ENCODE measurements at regions of chr5 and their contacts with region 1.

Region 1: DNA sequence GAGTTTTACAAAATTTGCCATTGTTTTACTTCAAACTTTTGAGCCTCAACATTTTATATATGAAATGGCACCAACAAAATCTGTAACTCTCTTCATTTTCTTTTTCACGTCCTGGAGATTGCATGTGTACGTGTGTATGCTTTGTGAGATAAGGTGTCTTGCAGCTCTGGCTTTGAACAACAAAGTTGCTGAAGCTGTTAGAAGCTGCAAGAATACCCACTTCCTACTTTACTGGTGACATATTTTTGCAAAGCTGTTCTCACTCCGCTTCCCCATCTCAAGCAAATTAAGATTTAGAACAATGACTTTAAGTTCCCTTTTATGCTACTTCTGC is 41.8 kb downstream of the FYB1 start:
- DNase-seq: no peak
- H3K4me3 Mint-ChIP-seq: peak overlapping the region; percentile 69
- H3K27ac Mint-ChIP-seq: peak overlapping the region; percentile 84
- H3K4me1 Mint-ChIP-seq: peaks cover 85% of the 10 kb centered on the region
- H3K27me3 Mint-ChIP-seq: no peaks in the 10 kb centered on the region

Region 2: DNA sequence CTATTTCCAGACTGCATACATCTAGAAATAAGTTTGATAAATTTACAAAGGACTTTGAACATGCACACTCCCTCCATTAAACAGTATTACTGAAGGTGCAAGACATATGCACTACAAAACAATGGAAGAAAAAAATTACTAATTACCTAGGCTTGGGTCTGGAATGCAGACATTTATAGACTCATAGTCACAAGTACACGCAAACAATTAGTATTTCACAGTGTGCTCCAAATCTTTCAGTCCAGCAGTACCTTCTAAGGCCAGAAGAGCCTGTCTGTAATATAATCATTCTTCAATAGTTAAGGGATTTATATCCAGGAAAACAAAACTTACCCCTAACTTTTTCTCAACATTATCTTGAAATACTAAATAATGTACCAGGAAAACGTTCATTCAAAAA is 114.6 kb before region 1 on chr5:
- intact Hi-C with region 1: no loop called
- DNase-seq: no peak
- H3K4me3 Mint-ChIP-seq: no peak overlapping the region
- H3K27ac Mint-ChIP-seq: no peak overlapping the region
- H3K4me1 Mint-ChIP-seq: peaks cover 31% of the 10 kb centered on the region
- H3K27me3 Mint-ChIP-seq: no peaks in the 10 kb centered on the region

Region 3: DNA sequence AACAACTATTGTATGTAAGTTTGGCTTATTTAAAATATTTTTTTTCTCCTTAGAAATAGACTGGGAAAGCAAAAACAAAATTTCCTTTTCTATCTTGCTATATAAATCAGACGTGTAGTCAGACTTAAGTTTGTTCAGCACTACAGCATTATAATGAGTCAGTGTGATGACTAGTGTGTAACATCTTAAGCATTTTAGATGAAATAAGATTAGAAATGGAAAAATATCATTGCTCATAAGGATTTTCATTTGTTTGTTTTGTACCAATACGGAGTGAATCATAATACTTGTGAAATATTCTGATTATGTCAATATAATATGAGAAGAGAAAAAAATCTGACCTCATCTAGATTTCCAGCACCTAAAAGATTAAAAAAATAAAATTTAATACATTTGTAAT is 38.7 kb before region 1 on chr5:
- intact Hi-C with region 1: no loop called
- DNase-seq: no peak
- H3K4me3 Mint-ChIP-seq: no peak overlapping the region
- H3K27ac Mint-ChIP-seq: no peak overlapping the region
- H3K4me1 Mint-ChIP-seq: peaks cover 18% of the 10 kb centered on the region
- H3K27me3 Mint-ChIP-seq: no peaks in the 10 kb centered on the region

Region 4: GRCh38 chr5:39202597-39203274 is 25.1 kb after region 1 on chr5:
- intact Hi-C with region 1: loop called (anchors 1 kb)
- DNase-seq: no peak
- H3K4me3 Mint-ChIP-seq: peak overlapping the region; percentile 89
- H3K27ac Mint-ChIP-seq: peak overlapping the region; percentile 90
- H3K4me1 Mint-ChIP-seq: peaks cover 62% of the 10 kb centered on the region
- H3K27me3 Mint-ChIP-seq: no peaks in the 10 kb centered on the region

Region 5: GRCh38 chr5:39209924-39210323 is 32.3 kb after region 1 on chr5:
- intact Hi-C with region 1: loop called (anchors 1 kb)
- DNase-seq: peak; percentile 82
- H3K4me3 Mint-ChIP-seq: peak overlapping the region; percentile 73
- H3K27ac Mint-ChIP-seq: peak overlapping the region; percentile 90
- H3K4me1 Mint-ChIP-seq: peaks cover 87% of the 10 kb centered on the region
- H3K27me3 Mint-ChIP-seq: no peaks in the 10 kb centered on the region

Region 6: GRCh38 chr5:39256477-39257235 is 79.1 kb after region 1 on chr5:
- intact Hi-C with region 1: no loop called
- DNase-seq: no peak
- H3K4me3 Mint-ChIP-seq: no peak overlapping the region
- H3K27ac Mint-ChIP-seq: no peak overlapping the region
- H3K4me1 Mint-ChIP-seq: peaks cover 19% of the 10 kb centered on the region
- H3K27me3 Mint-ChIP-seq: no peaks in the 10 kb centered on the region

Measured in activated T-helper 2 cell treated with anti-CD3 and anti-CD28 coated beads, Interferon-gamma antibody, Interleukin-2, Interleukin-4, amounts not matched to agents 10 μg/mL and 5 μg/mL and 100 μg/mL, durations not matched to agents 14 hours and 24 hours and 36 hours (primary cell).